Activated CD4-positive, alpha-beta T cell treated with anti-CD3 and anti-CD28 coated beads, Interleukin-2, amount 10 ng/mL, durations not matched to agents 24 days and 14 days (primary cell): ENCODE measurements at regions of chr13 and their contacts with region 1.

Region 1: DNA sequence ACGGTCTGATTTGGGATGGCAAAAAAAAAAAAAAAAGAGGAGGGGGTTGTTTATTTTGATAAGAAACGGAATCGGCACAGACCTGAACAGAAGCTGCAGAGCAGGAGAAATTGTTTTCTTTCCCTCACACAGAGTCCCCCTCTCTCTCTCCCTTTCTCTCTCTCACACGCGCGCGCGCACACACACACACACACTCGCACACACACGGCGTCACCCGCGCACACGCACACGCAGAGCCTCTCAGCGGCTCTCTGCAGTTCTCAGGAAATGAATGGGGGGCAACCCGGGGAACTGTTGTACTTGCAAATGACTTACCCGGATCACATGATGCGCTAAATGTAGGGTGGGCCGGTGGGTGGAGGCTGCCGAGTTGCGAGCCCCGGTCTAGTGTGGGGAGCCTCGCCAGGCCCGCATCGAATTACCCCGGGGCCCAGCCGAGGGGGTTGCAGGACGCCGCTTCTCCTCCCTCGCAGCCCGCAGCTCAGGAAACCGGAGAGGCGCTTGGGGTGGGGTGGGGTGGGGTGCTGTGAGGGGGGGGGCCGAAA is 475 bp downstream of the KLF12 start:
- DNase-seq: peak; percentile 95
- H3K4me3 Mint-ChIP-seq: peak overlapping the region; percentile 97
- H3K27ac Mint-ChIP-seq: peak overlapping the region; percentile 99
- H3K4me1 Mint-ChIP-seq: peaks cover 34% of the 10 kb centered on the region
- H3K27me3 Mint-ChIP-seq: peaks cover 7% of the 10 kb centered on the region

Region 2: GRCh38 chr13:72727417-72728289 is 1406.1 kb before region 1 on chr13 and contains the starts of genes BORA and MZT1:
- intact Hi-C with region 1: loop called (anchors 5 kb)
- DNase-seq: peak; percentile 99
- H3K4me3 Mint-ChIP-seq: peak within 1 kb of the TSS; percentile 96
- H3K27ac Mint-ChIP-seq: peak within 1 kb of the TSS; percentile 94
- H3K4me1 Mint-ChIP-seq: peaks cover 48% of the 10 kb centered on the region
- H3K27me3 Mint-ChIP-seq: no peaks in the 10 kb centered on the region
- total RNA-seq, gene BORA: 17.3 and 18.1 TPM in 2 replicates
- total RNA-seq, gene MZT1: 24.1 and 24.4 TPM in 2 replicates

Region 3: DNA sequence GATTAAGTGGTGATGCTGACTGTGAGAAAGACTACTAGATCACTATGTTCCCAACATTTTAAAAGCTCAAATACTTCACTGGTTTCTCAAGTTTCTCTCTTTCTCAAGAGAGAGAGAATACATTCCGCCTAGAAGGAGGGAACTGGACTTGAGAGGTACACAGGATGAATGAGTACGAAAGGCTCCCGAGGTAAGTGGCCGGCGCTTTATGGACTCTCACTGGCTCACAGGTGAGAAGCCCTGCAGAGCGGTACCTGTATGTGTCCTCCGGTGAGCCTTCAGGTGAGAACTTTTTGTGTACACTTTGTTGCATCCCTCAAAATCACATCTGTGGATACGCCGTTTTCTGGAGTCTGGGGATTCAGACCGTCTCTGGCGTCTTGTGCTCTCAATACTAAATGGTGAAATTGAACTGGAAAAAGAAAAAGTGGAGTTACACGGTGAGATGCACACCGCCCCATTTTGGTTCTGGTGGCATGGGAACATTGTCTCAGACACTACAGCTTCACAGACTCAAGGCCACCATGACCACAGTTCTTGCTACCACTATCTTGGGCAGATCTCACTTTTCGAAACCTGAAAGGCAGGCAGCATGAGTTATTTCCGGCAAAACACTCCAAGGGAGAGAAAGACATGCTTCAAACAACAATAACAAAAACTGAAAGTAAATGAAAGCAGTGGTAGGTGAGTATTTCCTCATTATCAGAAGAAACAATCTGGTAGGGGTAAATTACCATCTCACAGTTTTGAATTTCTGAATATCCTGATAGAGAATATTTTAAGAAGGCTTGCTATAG is 418.4 kb before region 1 on chr13:
- intact Hi-C with region 1: loop called (anchors 1 kb)
- DNase-seq: peak; percentile 89
- H3K4me3 Mint-ChIP-seq: peak overlapping the region; percentile 48
- H3K27ac Mint-ChIP-seq: peak overlapping the region; percentile 84
- H3K4me1 Mint-ChIP-seq: peaks cover 40% of the 10 kb centered on the region
- H3K27me3 Mint-ChIP-seq: no peaks in the 10 kb centered on the region

Region 4: GRCh38 chr13:73902296-73902695 is 231.4 kb before region 1 on chr13:
- intact Hi-C with region 1: no loop called
- DNase-seq: no peak
- H3K4me3 Mint-ChIP-seq: no peak overlapping the region
- H3K27ac Mint-ChIP-seq: no peak overlapping the region
- H3K4me1 Mint-ChIP-seq: no peaks in the 10 kb centered on the region
- H3K27me3 Mint-ChIP-seq: no peaks in the 10 kb centered on the region

Region 5: DNA sequence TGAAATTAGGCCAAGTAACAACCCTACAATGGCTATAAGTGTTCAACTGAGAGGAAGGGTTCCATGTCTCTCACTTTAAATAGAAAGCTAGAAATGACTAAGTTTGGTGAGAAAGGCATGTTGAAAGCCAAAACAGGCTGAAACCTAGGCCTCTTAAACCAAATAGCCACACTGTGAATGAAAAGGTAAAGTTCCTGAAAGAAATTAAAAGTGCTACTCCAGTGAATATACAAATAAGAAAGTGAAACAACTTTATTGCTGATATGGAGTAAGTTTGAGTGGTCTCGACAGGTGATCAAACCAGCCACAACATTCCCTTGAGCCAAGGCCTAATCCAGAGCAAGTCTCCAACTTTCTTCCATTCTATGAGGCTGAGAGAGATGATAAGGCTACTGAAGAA is 209.1 kb before region 1 on chr13:
- intact Hi-C with region 1: loop called (anchors 5 kb)
- DNase-seq: no peak
- H3K4me3 Mint-ChIP-seq: no peak overlapping the region
- H3K27ac Mint-ChIP-seq: peak overlapping the region; percentile 77
- H3K4me1 Mint-ChIP-seq: peaks cover 23% of the 10 kb centered on the region
- H3K27me3 Mint-ChIP-seq: no peaks in the 10 kb centered on the region

Region 6: GRCh38 chr13:74026753-74027152 is 107.0 kb before region 1 on chr13:
- intact Hi-C with region 1: loop called (anchors 1 kb)
- DNase-seq: peak; percentile 86
- H3K4me3 Mint-ChIP-seq: peak overlapping the region; percentile 76
- H3K27ac Mint-ChIP-seq: peak overlapping the region; percentile 86
- H3K4me1 Mint-ChIP-seq: peaks cover 27% of the 10 kb centered on the region
- H3K27me3 Mint-ChIP-seq: no peaks in the 10 kb centered on the region

Region 7: GRCh38 chr13:74115138-74115537 is 18.6 kb before region 1 on chr13:
- intact Hi-C with region 1: loop called (anchors 2 kb)
- DNase-seq: no peak
- H3K4me3 Mint-ChIP-seq: no peak overlapping the region
- H3K27ac Mint-ChIP-seq: peak overlapping the region; percentile 34
- H3K4me1 Mint-ChIP-seq: peaks cover 42% of the 10 kb centered on the region
- H3K27me3 Mint-ChIP-seq: no peaks in the 10 kb centered on the region

Region 8: GRCh38 chr13:75319254-75319653 is 1185.5 kb after region 1 on chr13:
- intact Hi-C with region 1: loop called (anchors 2 kb)
- DNase-seq: no peak
- H3K4me3 Mint-ChIP-seq: peak overlapping the region; percentile 4
- H3K27ac Mint-ChIP-seq: peak overlapping the region; percentile 93
- H3K4me1 Mint-ChIP-seq: peaks cover 51% of the 10 kb centered on the region
- H3K27me3 Mint-ChIP-seq: no peaks in the 10 kb centered on the region